ENCODE measurements at regions of chr22 and their contacts with region 1.

Region 1: DNA sequence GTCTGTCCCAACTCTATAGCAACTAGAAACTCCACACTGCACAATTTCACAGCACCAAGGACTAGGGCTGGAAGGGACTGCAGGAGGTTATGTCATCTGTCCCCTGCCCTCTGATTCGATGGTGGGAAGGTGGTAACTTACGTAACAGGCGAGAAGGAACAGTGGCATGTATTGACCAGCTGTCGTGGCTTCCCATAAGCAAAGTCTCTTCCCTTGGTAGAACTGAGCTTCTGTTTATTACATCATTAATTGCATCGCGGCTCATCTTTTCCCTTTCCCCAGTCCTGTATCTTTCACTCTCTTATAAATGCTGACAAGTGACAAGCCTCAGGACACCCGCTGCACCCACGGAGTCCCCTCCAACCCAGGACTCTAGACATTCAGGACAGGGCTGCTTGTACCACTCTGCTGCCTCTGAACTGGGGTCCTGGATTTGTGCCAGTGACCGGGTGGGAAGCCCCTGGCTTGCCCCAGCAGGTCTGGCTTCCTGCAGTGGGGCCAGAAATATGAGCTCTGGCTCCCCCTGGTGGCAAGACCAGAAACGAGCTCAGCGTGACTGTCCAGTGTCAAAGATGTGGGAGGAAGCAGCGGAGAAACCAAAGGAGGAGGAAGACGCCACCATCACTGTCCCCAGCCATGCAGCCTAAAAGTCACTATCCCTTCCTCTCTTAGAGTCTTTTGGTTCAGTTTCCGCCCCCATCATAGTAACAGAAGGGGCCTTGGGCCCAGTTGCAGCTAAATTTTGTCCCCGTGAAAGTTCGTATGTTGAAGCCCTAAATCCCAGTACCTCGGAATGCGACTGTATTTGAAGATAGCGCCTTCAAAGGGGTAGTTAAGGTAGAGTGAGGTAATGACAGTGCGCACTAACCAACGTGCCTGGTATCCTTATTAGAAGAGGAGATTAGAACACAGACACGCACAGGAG is 84.5 kb downstream of the ISX start:
- DNase-seq: no peak
- ATAC-seq: peak; percentile 87
- H3K4me3 ChIP-seq: no peak overlapping the region
- H3K27ac ChIP-seq: peak overlapping the region; percentile 56
- H3K4me1 ChIP-seq: peaks cover 19% of the 10 kb centered on the region
- H3K27me3 ChIP-seq: no peaks in the 10 kb centered on the region
- CTCF ChIP-seq: peak; percentile 79 to 87 (median 82)
- EP300 ChIP-seq: no peak
- POLR2A ChIP-seq: no peak
- RAD21 ChIP-seq: peak; percentile 88

Region 2: GRCh38 chr22:33920927-33921524 is 1229.4 kb before region 1 on chr22:
- CTCF ChIA-PET with region 1: interaction called, 10 read pairs
- POLR2A ChIA-PET with region 1: no interaction called
- RAD21 ChIA-PET with region 1: interaction called, 5 read pairs
- SMC1A ChIA-PET with region 1: interaction called, 3 read pairs
- in situ Hi-C with region 1: loop called (anchors 10 kb)
- intact Hi-C with region 1: loop called (anchors 5 kb)
- DNase-seq: peak; percentile 43
- ATAC-seq: peak; percentile 82
- H3K4me3 ChIP-seq: peak overlapping the region; percentile 93
- H3K27ac ChIP-seq: no peak overlapping the region
- H3K4me1 ChIP-seq: peaks cover 3% of the 10 kb centered on the region; the same call in 1 of the 2 replicates
- H3K27me3 ChIP-seq: peaks cover 0 to 1% of the 10 kb centered on the region in 2 experiments; a peak in 2 of 4 replicates
- CTCF ChIP-seq: no peak
- EP300 ChIP-seq: no peak
- POLR2A ChIP-seq: peak; percentile 92
- RAD21 ChIP-seq: no peak

Region 3: GRCh38 chr22:34429314-34429713 is 721.1 kb before region 1 on chr22:
- CTCF ChIA-PET with region 1: no interaction called
- POLR2A ChIA-PET with region 1: no interaction called
- RAD21 ChIA-PET with region 1: no interaction called
- SMC1A ChIA-PET with region 1: no interaction called
- in situ Hi-C with region 1: loop called (anchors 5 kb)
- intact Hi-C with region 1: no loop called
- DNase-seq: no peak
- ATAC-seq: no peak
- H3K4me3 ChIP-seq: no peak overlapping the region
- H3K27ac ChIP-seq: no peak overlapping the region
- H3K4me1 ChIP-seq: no peaks in the 10 kb centered on the region
- H3K27me3 ChIP-seq: no peaks in the 10 kb centered on the region
- CTCF ChIP-seq: no peak
- EP300 ChIP-seq: no peak
- POLR2A ChIP-seq: no peak
- RAD21 ChIP-seq: no peak

Region 4: GRCh38 chr22:35023692-35024363 is 126.6 kb before region 1 on chr22:
- CTCF ChIA-PET with region 1: interaction called, 20 read pairs
- POLR2A ChIA-PET with region 1: no interaction called
- RAD21 ChIA-PET with region 1: interaction called, 14 read pairs
- SMC1A ChIA-PET with region 1: interaction called, 4 read pairs
- in situ Hi-C with region 1: no loop called
- intact Hi-C with region 1: no loop called
- DNase-seq: no peak
- ATAC-seq: peak; percentile 98
- H3K4me3 ChIP-seq: no peak overlapping the region
- H3K27ac ChIP-seq: no peak overlapping the region
- H3K4me1 ChIP-seq: no peaks in the 10 kb centered on the region
- H3K27me3 ChIP-seq: no peaks in the 10 kb centered on the region
- CTCF ChIP-seq: peak; percentile 88 to 94 (median 92)
- EP300 ChIP-seq: no peak
- POLR2A ChIP-seq: no peak
- RAD21 ChIP-seq: peak; percentile 90

Region 5: GRCh38 chr22:35119494-35119893 is 31.0 kb before region 1 on chr22:
- CTCF ChIA-PET with region 1: interaction called, 19 read pairs
- POLR2A ChIA-PET with region 1: no interaction called
- RAD21 ChIA-PET with region 1: interaction called, 14 read pairs
- SMC1A ChIA-PET with region 1: interaction called, 8 read pairs
- in situ Hi-C with region 1: no loop called
- intact Hi-C with region 1: no loop called
- DNase-seq: no peak
- ATAC-seq: no peak; the same call in 2 of the 3 replicates
- H3K4me3 ChIP-seq: no peak overlapping the region
- H3K27ac ChIP-seq: no peak overlapping the region
- H3K4me1 ChIP-seq: peaks cover 22% of the 10 kb centered on the region
- H3K27me3 ChIP-seq: no peaks in the 10 kb centered on the region
- CTCF ChIP-seq: no peak
- EP300 ChIP-seq: no peak
- POLR2A ChIP-seq: no peak
- RAD21 ChIP-seq: no peak

Region 6: DNA sequence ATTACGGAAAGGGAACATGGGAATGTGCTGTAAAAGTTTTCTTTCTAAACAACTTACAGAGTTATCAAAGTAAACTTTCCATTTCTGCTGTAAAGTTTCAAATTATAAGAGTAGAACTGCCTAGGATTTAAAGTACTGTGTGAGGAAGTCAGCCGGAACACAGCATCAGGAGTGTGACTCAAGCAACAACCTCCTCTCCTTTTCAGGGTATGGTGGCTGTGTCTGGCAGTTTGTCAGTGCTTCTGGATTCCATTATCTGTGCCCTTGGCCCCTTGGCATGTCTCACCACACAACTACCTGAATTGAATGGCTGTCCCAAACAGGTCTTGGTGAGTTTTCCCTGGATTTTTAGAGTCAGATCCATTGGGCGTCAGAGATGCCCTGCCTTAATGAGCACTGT is 142.3 kb after region 1 on chr22:
- CTCF ChIA-PET with region 1: no interaction called
- POLR2A ChIA-PET with region 1: no interaction called
- RAD21 ChIA-PET with region 1: no interaction called
- SMC1A ChIA-PET with region 1: no interaction called
- in situ Hi-C with region 1: no loop called
- intact Hi-C with region 1: no loop called
- DNase-seq: no peak
- ATAC-seq: no peak
- H3K4me3 ChIP-seq: no peak overlapping the region
- H3K27ac ChIP-seq: no peak overlapping the region
- H3K4me1 ChIP-seq: no peaks in the 10 kb centered on the region
- H3K27me3 ChIP-seq: no peaks in the 10 kb centered on the region
- CTCF ChIP-seq: no peak
- EP300 ChIP-seq: no peak
- POLR2A ChIP-seq: no peak
- RAD21 ChIP-seq: no peak